T-cell (primary cell): ENCODE measurements at regions of chr2 and their contacts with region 1.

Region 1: GRCh38 chr2:219002395-219003266 is 9.4 kb upstream of the CRYBA2 start:
- DNase-seq: peak in 27 of 35 experiments; percentile 21 to 61 (median 35)
- ATAC-seq: peak; percentile 31 to 72 (median 44)
- H3K4me3 ChIP-seq: peak overlapping the region; percentile 12 to 41
- H3K4me3 Mint-ChIP-seq: peak overlapping the region; percentile 58 to 72 (median 65)
- H3K27ac ChIP-seq: no peak overlapping the region
- H3K27ac Mint-ChIP-seq: no peak overlapping the region
- H3K4me1 ChIP-seq: peaks cover 3 to 30% of the 10 kb centered on the region in 2 experiments
- H3K4me1 Mint-ChIP-seq: peaks cover 10 to 22% (median 18%) of the 10 kb centered on the region in 3 donors
- H3K27me3 ChIP-seq: peaks cover 9 to 94% of the 10 kb centered on the region in 2 experiments
- H3K27me3 Mint-ChIP-seq: peaks cover 56 to 74% of the 10 kb centered on the region in 2 donors

Region 2: GRCh38 chr2:219597552-219598307 is 595.1 kb after region 1 on chr2 and contains the start of gene STK11IP:
- CTCF ChIA-PET with region 1: interaction called in 1 of 2 experiments, 12 read pairs
- POLR2A ChIA-PET with region 1: no interaction called
- DNase-seq: peak; percentile 76 to 95 (median 86)
- ATAC-seq: peak; percentile 88 to 92 (median 90)
- H3K4me3 ChIP-seq: peak within 1 kb of the TSS; percentile 82 to 100
- H3K4me3 Mint-ChIP-seq: peak within 1 kb of the TSS; percentile 93 to 95 (median 93)
- H3K27ac ChIP-seq: peak within 1 kb of the TSS; percentile 65
- H3K27ac Mint-ChIP-seq: peak within 1 kb of the TSS; percentile 88 to 97
- H3K4me1 ChIP-seq: peaks cover 3 to 13% of the 10 kb centered on the region in 2 experiments
- H3K4me1 Mint-ChIP-seq: peaks cover 18 to 24% (median 22%) of the 10 kb centered on the region in 3 donors
- H3K27me3 ChIP-seq: peaks cover 0 to 6% of the 10 kb centered on the region in 2 experiments
- H3K27me3 Mint-ChIP-seq: peaks cover 6 to 11% of the 10 kb centered on the region in 2 donors
- total RNA-seq, gene STK11IP: 25.9 to 52.8 (median 49.3) TPM